ENCODE measurements at regions of chr17 and their contacts with region 1.

Region 1: DNA sequence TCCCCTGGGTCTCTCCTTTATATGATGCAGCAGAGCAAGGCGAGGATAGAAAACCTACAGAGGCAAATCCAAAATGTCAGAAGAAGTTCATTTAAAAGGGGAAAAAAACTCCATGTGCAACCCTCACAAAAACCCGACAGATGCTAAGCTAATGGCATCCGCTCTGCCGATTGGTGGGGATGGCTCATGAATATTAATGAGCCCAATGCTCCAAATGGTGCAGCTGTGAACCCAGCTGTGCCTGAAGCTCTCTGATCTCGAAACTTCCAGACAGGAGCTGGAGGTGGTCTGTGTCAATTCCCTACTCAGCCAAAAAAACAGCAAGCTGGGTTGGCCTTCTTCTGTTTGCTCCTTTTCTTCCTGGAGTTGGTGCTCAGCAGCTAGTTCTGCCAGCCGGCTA is 15.5 kb downstream of the SNX11 start:
- DNase-seq: no peak
- H3K4me3 ChIP-seq: no peak overlapping the region
- H3K4me3 Mint-ChIP-seq: no peak overlapping the region
- H3K27ac ChIP-seq: no peak overlapping the region
- H3K27ac Mint-ChIP-seq: peak overlapping the region in 3 of 8 donors; percentile 32 to 64 (median 47)
- H3K4me1 ChIP-seq: no peaks in the 10 kb centered on the region
- H3K4me1 Mint-ChIP-seq: no peaks in the 10 kb centered on the region
- H3K27me3 ChIP-seq: no peaks in the 10 kb centered on the region
- H3K27me3 Mint-ChIP-seq: no peaks in the 10 kb centered on the region

Region 2: GRCh38 chr17:48074315-48075081 is 48.6 kb before region 1 on chr17:
- CTCF ChIA-PET with region 1: interaction called, 10 read pairs
- POLR2A ChIA-PET with region 1: no interaction called
- DNase-seq: peak; percentile 60 to 80 (median 67)
- H3K4me3 ChIP-seq: no peak overlapping the region
- H3K4me3 Mint-ChIP-seq: no peak overlapping the region
- H3K27ac ChIP-seq: no peak overlapping the region
- H3K27ac Mint-ChIP-seq: no peak overlapping the region
- H3K4me1 ChIP-seq: no peaks in the 10 kb centered on the region
- H3K4me1 Mint-ChIP-seq: no peaks in the 10 kb centered on the region
- H3K27me3 ChIP-seq: no peaks in the 10 kb centered on the region
- H3K27me3 Mint-ChIP-seq: no peaks in the 10 kb centered on the region